PC-9 (cell line): ENCODE measurements at regions of chr12 and their contacts with region 1.

Region 1: DNA sequence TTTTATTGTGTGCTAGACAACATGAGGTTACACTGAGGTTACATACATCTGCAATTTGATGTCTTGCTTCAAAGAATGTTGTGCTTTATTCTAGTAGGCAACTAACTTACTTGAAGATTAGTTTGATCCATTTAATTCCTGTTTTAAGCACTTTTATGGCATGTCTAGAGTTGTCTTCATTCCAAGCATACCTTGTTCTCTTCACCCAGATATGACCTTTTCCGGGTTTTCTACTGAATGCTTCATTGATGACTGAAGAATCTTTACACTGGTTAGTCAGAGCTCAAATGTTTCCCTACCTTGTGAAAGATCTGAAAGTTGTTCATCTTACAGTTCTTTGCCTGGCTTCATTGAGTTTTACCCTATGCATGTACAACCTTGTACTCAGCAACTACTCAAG is 274.0 kb upstream of the KITLG start:
- DNase-seq: peak; percentile 3 to 84
- H3K4me3 ChIP-seq: no peak overlapping the region
- H3K27ac ChIP-seq: peak overlapping the region; percentile 50
- H3K4me1 ChIP-seq: peaks cover 18% of the 10 kb centered on the region
- H3K27me3 ChIP-seq: no peaks in the 10 kb centered on the region
- CTCF ChIP-seq: no peak

Region 2: GRCh38 chr12:88922816-88923215 is 68.6 kb after region 1 on chr12:
- CTCF ChIA-PET with region 1: no interaction called
- POLR2A ChIA-PET with region 1: no interaction called
- intact Hi-C with region 1: loop called (anchors 5 kb)
- DNase-seq: no peak
- H3K4me3 ChIP-seq: no peak overlapping the region
- H3K27ac ChIP-seq: no peak overlapping the region
- H3K4me1 ChIP-seq: peaks cover 26% of the 10 kb centered on the region
- H3K27me3 ChIP-seq: no peaks in the 10 kb centered on the region
- CTCF ChIP-seq: no peak

Region 3: DNA sequence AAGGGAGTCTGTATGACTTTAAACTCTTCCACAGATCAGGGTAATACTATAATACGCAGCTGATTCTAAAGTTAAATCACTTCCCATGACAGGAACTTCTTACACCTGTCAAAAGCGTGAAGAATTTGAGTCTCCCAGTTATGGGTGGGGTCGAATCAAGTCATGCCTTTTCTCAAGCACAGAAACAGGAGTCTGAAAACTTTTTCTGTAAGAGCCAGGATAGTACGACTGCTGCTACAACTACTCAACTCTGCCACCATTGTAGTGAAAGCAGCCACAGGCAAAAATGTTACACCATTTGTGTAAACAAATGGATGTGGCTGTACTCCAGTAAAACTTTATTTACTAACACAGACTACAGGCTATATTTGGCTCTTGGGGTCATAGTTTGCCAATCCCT is 407.7 kb after region 1 on chr12:
- CTCF ChIA-PET with region 1: no interaction called
- POLR2A ChIA-PET with region 1: no interaction called
- intact Hi-C with region 1: no loop called
- DNase-seq: no peak
- H3K4me3 ChIP-seq: no peak overlapping the region
- H3K27ac ChIP-seq: no peak overlapping the region
- H3K4me1 ChIP-seq: peaks cover 27% of the 10 kb centered on the region
- H3K27me3 ChIP-seq: no peaks in the 10 kb centered on the region
- CTCF ChIP-seq: no peak